ENCODE measurements at regions of chr6 and their contacts with region 1.

Region 1: GRCh38 chr6:26568601-26569432 is 27.9 kb upstream of the ABT1 start:
- DNase-seq: peak; percentile 95 to 100 (median 99)
- ATAC-seq: peak; percentile 73
- H3K4me3 ChIP-seq: peak overlapping the region; percentile 74 to 90
- H3K4me3 Mint-ChIP-seq: peak overlapping the region; percentile 92
- H3K27ac ChIP-seq: peak overlapping the region; percentile 79 to 80
- H3K27ac Mint-ChIP-seq: peak overlapping the region; percentile 97
- H3K4me1 ChIP-seq: peaks cover 15% of the 10 kb centered on the region
- H3K4me1 Mint-ChIP-seq: peaks cover 20% of the 10 kb centered on the region
- H3K27me3 ChIP-seq: no peaks in the 10 kb centered on the region
- H3K27me3 Mint-ChIP-seq: peaks cover 2% of the 10 kb centered on the region
- CTCF ChIP-seq: peak; percentile 34

Region 2: DNA sequence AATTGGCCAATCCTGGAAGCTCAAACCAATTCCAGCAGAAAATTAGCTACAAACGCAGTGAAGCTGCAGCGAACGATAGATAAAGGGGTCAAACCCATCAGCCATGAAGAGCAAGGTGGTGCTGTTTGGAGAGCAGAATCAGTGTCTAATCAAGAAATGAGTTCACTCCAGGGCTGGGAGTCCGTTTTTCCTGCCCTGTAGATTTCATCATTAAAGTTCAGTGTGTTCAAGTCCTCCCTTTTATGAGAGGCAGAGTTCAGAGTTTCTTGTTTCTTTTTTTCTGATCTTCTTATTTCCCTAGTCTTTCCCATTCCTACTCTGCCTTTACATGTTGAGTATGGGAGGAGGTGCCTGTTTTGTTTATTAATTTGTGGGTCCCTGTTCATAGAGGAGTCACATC is 767.4 kb before region 1 on chr6:
- CTCF ChIA-PET with region 1: no interaction called
- POLR2A ChIA-PET with region 1: no interaction called
- intact Hi-C with region 1: no loop called
- DNase-seq: no peak
- ATAC-seq: no peak
- H3K4me3 ChIP-seq: no peak overlapping the region
- H3K4me3 Mint-ChIP-seq: no peak overlapping the region
- H3K27ac ChIP-seq: no peak overlapping the region
- H3K27ac Mint-ChIP-seq: no peak overlapping the region
- H3K4me1 ChIP-seq: no peaks in the 10 kb centered on the region
- H3K4me1 Mint-ChIP-seq: no peaks in the 10 kb centered on the region
- H3K27me3 ChIP-seq: peaks cover 0 to 3% of the 10 kb centered on the region in 2 experiments
- H3K27me3 Mint-ChIP-seq: peaks cover 24% of the 10 kb centered on the region
- CTCF ChIP-seq: no peak

Region 3: GRCh38 chr6:26054857-26055669 is 513.8 kb before region 1 on chr6:
- CTCF ChIA-PET with region 1: no interaction called
- POLR2A ChIA-PET with region 1: no interaction called
- intact Hi-C with region 1: loop called in 1 of 2 experiments (anchors 10 kb)
- DNase-seq: peak; percentile 71 to 94 (median 88)
- ATAC-seq: peak; percentile 72
- H3K4me3 ChIP-seq: peak overlapping the region; percentile 75 to 85
- H3K4me3 Mint-ChIP-seq: peak overlapping the region; percentile 96
- H3K27ac ChIP-seq: peak overlapping the region; percentile 85 to 96
- H3K27ac Mint-ChIP-seq: peak overlapping the region; percentile 99
- H3K4me1 ChIP-seq: peaks cover 17% of the 10 kb centered on the region
- H3K4me1 Mint-ChIP-seq: peaks cover 23% of the 10 kb centered on the region
- H3K27me3 ChIP-seq: no peaks in the 10 kb centered on the region
- H3K27me3 Mint-ChIP-seq: no peaks in the 10 kb centered on the region
- CTCF ChIP-seq: no peak

Region 4: DNA sequence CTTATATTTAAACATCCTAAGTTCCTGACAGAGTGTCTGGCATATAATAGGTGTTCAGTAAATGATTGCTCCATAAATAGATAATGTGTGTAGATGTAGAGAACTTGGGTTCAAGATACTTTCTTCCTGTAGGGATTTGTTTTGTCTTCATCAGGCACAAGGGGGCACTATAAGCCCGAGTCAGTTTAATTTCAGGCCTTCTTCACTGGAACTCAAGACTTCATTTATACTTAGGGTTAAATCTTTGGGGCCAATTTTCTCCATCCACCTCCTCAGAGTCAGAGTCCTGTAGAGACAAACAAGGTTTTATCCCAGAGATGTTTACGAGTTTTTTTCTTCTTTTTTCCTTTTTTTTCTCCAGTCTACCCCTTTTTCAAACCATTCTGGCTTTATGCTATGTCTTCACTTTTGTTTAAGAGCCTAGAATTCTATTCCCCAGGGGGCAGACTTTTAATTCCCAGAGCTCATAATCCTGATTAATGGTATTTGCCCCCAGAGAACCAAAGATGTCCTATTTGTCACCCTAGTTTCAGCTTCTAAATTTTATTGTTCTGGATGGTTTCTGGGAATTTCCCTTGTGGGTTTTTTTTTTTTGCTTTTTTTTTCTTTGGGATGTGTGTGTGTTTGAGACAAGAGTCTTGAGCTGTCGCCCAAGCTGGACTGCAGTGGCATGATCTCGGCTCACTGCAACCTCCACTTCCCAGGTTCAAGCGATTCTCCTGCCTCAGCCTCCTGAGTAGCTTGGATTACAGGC is 393.2 kb before region 1 on chr6:
- CTCF ChIA-PET with region 1: interaction called, 3 read pairs
- POLR2A ChIA-PET with region 1: interaction called, 5 read pairs
- intact Hi-C with region 1: loop called in 1 of 2 experiments (anchors 10 kb)
- DNase-seq: peak in 7 of 9 experiments; percentile 33 to 87 (median 53)
- ATAC-seq: no peak
- H3K4me3 ChIP-seq: no peak overlapping the region
- H3K4me3 Mint-ChIP-seq: peak overlapping the region; percentile 3
- H3K27ac ChIP-seq: no peak overlapping the region
- H3K27ac Mint-ChIP-seq: peak overlapping the region; percentile 63
- H3K4me1 ChIP-seq: peaks cover 26% of the 10 kb centered on the region
- H3K4me1 Mint-ChIP-seq: peaks cover 39% of the 10 kb centered on the region
- H3K27me3 ChIP-seq: no peaks in the 10 kb centered on the region
- H3K27me3 Mint-ChIP-seq: no peaks in the 10 kb centered on the region
- CTCF ChIP-seq: peak; percentile 93

Region 5: DNA sequence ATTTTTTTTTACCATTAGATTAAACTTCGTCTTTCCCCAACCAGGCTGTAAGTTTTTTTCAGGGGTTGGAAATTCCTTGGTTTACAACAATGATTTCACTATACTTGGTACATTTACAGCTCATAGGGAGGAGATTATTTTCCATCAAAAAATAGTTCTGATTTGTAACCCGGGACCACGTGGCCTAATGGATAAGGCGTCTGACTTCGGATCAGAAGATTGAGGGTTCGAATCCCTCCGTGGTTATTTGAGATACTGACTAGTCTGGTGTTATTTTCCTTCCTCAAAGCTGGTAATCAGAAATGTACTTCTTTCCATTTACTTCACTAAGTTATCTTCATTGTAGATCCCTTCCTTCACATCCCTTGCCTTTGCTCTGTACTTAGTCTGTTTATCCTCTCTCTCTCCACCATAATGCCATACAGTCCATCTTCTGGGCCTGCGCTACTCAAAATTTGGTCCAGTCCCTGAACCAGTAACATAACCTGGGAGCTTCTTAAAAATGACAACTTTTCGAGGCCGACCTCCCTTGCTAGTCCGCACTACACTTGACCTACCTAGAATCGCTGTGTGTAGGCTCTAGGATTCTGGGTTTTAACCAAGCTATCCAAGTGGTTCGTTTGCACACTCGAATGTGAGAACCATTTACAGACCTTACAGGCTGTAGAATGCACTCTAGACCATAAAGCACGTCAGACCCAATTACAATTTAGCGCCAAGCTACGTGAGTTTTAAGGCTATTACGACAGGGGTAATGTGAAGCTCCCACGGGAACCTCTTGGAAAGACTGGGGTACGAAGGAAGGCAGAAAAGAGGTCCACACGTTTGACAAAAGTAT is 246.0 kb before region 1 on chr6:
- CTCF ChIA-PET with region 1: interaction called, 5 read pairs
- POLR2A ChIA-PET with region 1: no interaction called
- intact Hi-C with region 1: loop called in 1 of 2 experiments (anchors 10 kb)
- DNase-seq: peak in 8 of 9 experiments; percentile 32 to 86 (median 58)
- ATAC-seq: peak; percentile 65
- H3K4me3 ChIP-seq: peak overlapping the region; percentile 55 to 64
- H3K4me3 Mint-ChIP-seq: peak overlapping the region; percentile 88
- H3K27ac ChIP-seq: no peak overlapping the region
- H3K27ac Mint-ChIP-seq: peak overlapping the region; percentile 90
- H3K4me1 ChIP-seq: peaks cover 5% of the 10 kb centered on the region
- H3K4me1 Mint-ChIP-seq: peaks cover 24% of the 10 kb centered on the region
- H3K27me3 ChIP-seq: peaks cover 0 to 2% of the 10 kb centered on the region in 2 experiments
- H3K27me3 Mint-ChIP-seq: peaks cover 15% of the 10 kb centered on the region
- CTCF ChIP-seq: no peak

Region 6: DNA sequence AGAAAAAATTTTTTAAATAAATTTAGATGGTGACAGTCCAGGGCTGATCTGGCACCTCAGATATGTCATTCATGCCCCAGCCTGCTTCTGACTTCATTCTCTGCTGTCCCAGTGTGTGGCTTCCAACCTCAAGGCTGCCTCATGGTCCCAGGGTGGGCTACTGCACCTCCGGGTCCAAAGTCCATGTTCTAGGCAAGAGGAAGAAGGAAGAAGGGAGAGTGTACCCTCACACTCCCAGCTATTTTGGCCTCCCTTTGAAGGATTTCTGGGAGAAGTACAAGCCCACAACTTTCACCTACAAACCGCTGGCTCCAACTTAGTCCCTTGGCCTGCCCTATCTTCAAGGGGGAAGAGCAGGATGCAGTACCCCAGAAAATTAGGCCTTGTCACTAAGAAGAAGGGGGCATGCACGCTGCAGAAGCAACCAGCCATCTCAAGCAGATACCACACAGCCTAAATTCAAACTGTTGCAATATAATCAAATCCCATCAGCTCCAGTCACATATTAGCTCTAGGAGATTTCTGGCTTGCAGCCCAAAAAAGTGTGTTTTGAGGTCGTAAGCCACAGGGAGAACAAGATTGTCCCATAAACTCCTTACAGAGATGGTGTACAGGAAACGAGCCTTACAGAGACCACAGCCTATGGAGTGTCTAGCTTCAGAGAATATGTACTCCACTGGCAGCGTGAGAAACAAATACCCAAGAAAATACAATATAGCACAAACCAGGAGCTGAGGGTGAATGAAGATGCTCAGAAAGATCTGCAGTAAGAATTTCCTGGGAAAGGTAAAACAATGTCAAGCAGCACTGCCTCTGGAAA is 204.7 kb before region 1 on chr6:
- CTCF ChIA-PET with region 1: interaction called, 3 read pairs
- POLR2A ChIA-PET with region 1: interaction called, 4 read pairs
- intact Hi-C with region 1: loop called in 1 of 2 experiments (anchors 1 kb)
- DNase-seq: peak in 6 of 9 experiments; percentile 9 to 69 (median 34)
- ATAC-seq: no peak
- H3K4me3 ChIP-seq: peak overlapping the region; percentile 90 to 92
- H3K4me3 Mint-ChIP-seq: no peak overlapping the region
- H3K27ac ChIP-seq: peak overlapping the region; percentile 95
- H3K27ac Mint-ChIP-seq: no peak overlapping the region
- H3K4me1 ChIP-seq: peaks cover 51% of the 10 kb centered on the region
- H3K4me1 Mint-ChIP-seq: peaks cover 53% of the 10 kb centered on the region
- H3K27me3 ChIP-seq: no peaks in the 10 kb centered on the region
- H3K27me3 Mint-ChIP-seq: no peaks in the 10 kb centered on the region
- CTCF ChIP-seq: no peak

Region 7: GRCh38 chr6:26383624-26384417 is 185.0 kb before region 1 on chr6:
- CTCF ChIA-PET with region 1: no interaction called
- POLR2A ChIA-PET with region 1: no interaction called
- intact Hi-C with region 1: no loop called
- DNase-seq: peak in 5 of 9 experiments; percentile 14 to 57 (median 21)
- ATAC-seq: peak; percentile 25
- H3K4me3 ChIP-seq: peak overlapping the region; percentile 94
- H3K4me3 Mint-ChIP-seq: peak overlapping the region; percentile 98
- H3K27ac ChIP-seq: peak overlapping the region; percentile 73 to 91
- H3K27ac Mint-ChIP-seq: peak overlapping the region; percentile 95
- H3K4me1 ChIP-seq: peaks cover 12% of the 10 kb centered on the region
- H3K4me1 Mint-ChIP-seq: peaks cover 44% of the 10 kb centered on the region
- H3K27me3 ChIP-seq: no peaks in the 10 kb centered on the region
- H3K27me3 Mint-ChIP-seq: no peaks in the 10 kb centered on the region
- CTCF ChIP-seq: no peak

Region 8: GRCh38 chr6:26520853-26521599 is 47.8 kb before region 1 on chr6:
- CTCF ChIA-PET with region 1: no interaction called
- POLR2A ChIA-PET with region 1: interaction called, 3 read pairs
- intact Hi-C with region 1: loop called (anchors 1 to 2 kb)
- DNase-seq: peak; percentile 69 to 94 (median 86)
- ATAC-seq: peak; percentile 80
- H3K4me3 ChIP-seq: peak overlapping the region; percentile 50 to 57
- H3K4me3 Mint-ChIP-seq: peak overlapping the region; percentile 83
- H3K27ac ChIP-seq: peak overlapping the region; percentile 35 to 86
- H3K27ac Mint-ChIP-seq: peak overlapping the region; percentile 83
- H3K4me1 ChIP-seq: peaks cover 8% of the 10 kb centered on the region
- H3K4me1 Mint-ChIP-seq: peaks cover 31% of the 10 kb centered on the region
- H3K27me3 ChIP-seq: no peaks in the 10 kb centered on the region
- H3K27me3 Mint-ChIP-seq: no peaks in the 10 kb centered on the region
- CTCF ChIP-seq: no peak

Region 9: DNA sequence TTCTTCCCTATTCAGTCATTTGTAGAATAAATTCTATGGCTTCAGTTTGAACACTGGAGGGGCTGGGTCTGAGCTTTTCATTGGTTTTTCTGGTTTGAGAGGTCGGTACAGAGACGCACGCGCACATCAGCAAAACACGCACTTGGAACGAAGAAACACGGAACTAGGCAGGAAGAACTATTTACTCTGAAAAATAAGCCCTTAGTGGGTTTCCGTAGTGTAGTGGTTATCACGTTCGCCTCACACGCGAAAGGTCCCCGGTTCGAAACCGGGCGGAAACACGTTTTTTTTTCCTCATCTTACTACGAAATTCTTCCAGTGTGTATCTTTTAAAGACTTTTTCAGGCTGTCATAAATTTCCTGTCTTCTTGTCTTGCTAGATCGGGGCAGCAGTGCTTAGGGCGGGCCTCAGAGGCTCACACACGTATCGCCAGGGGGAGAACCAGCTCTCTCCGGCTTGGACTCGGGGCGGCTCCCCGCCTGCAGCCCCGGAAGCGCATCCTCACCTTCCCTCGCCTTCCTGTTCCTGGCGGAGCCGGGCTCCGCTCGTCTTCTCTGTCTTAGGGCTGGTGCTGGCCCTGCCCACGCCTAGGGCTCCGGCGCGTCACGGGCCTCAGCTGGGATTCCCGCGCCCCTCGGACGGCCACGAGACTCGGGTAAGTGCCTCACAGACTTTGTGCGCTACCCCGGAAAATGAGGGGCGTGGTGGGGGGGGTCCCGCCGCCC is 30.8 kb before region 1 on chr6 and contains the start of gene HMGN4:
- CTCF ChIA-PET with region 1: interaction called, 13 read pairs
- POLR2A ChIA-PET with region 1: interaction called, 33 read pairs
- intact Hi-C with region 1: loop called (anchors 1 kb)
- DNase-seq: peak; percentile 65 to 96 (median 79)
- ATAC-seq: peak; percentile 69
- H3K4me3 ChIP-seq: peak within 1 kb of the TSS; percentile 66 to 99
- H3K4me3 Mint-ChIP-seq: peak within 1 kb of the TSS; percentile 89
- H3K27ac ChIP-seq: peak within 1 kb of the TSS; percentile 88 to 93
- H3K27ac Mint-ChIP-seq: peak within 1 kb of the TSS; percentile 92
- H3K4me1 ChIP-seq: peaks cover 32% of the 10 kb centered on the region
- H3K4me1 Mint-ChIP-seq: peaks cover 58% of the 10 kb centered on the region
- H3K27me3 ChIP-seq: no peaks in the 10 kb centered on the region
- H3K27me3 Mint-ChIP-seq: no peaks in the 10 kb centered on the region
- CTCF ChIP-seq: no peak
- total RNA-seq, gene HMGN4: 24.8 to 33.7 TPM